H1 (cell line): ENCODE measurements at regions of chr18 and their contacts with region 1.

Region 1: DNA sequence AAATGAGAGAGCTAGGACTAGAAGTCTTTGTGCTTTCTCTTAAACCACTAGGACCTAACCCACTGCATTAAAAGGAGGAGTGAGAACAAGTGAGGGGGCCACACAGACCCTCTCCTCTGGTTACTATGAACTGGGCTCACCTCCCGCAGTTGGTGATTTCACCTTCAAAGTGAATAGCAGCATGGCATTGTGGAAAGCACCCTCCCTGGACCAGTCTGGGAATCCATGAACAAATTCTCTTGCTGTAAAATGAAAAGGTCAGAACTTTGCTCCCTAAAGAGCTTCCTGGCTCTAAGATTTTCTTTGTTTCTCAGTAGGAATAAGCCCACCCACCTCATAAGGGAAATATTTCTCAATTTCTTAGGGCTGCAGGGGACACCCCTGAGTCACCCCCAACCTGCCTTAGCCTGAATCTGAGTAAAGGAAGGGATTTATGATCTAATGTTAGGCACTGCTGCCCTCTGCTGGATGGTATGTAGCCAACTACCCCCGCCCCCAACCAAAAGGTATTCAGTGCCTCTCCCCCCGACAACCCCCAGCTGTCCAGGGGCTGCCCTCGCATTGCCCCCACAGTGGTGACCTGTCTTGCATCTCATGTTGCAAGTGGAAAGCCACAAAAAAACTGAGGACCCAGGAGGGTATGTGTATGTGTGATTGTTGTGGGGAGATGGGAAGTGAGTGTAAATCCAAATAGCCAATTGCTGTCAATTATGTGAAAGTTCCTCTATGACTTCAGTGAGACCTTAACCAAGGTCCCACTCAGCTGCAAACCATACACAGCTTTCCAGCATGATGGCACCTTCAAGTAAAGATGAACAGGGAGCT is 230.9 kb upstream of the SLC14A2 start:
- DNase-seq: peak; percentile 19 to 86
- H3K4me3 ChIP-seq: no peak overlapping the region
- H3K27ac ChIP-seq: no peak overlapping the region
- H3K4me1 ChIP-seq: peaks cover 0 to 4% (median 1%) of the 10 kb centered on the region in 4 experiments; a peak in 3 of 7 replicates
- H3K27me3 ChIP-seq: no peaks in the 10 kb centered on the region
- CTCF ChIP-seq: peak; percentile 65 to 77 (median 75)
- EP300 ChIP-seq: no peak
- POLR2A ChIP-seq: no peak
- RAD21 ChIP-seq: peak; percentile 76 to 84

Region 2: DNA sequence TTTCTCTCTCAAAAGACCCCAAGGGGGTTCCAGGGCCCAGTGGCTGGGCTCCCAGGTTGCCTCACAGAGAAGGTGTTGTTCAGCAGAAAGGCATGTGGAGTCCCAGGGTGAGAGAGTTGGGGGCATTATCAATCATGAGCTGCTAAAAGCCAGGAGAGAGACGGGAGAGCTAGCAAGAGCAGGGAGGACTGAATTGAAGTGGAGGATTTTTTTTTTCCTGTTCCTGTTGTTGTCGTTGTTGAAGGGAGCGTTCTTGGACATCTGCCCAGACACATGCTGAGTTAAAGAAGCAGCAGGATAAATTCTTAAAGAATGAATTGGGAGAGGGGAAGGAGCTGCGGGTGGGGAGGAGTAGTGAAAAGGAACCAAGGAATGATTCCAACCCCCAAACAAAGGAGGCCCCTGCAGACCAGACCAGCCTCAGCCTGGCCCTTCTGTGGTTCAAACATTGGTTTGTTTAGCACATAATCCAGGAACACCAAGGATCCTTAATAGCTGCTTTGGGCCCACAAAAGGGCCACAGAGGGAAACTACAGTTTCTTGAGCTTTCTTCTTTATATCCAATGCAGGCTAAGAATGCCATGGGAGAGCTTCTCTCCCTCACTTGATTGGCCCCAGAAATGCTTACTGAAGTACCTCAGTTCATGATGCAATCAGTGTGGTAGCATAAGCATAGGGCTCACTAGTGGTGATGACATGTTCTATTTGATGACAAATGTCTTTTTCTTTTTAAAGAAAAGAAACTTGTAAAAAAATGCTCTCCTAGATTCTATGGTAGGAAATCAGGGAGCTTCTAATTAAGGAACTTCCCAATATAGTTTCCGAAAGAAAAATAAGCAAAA is 557.7 kb before region 1 on chr18:
- CTCF ChIA-PET with region 1: no interaction called
- POLR2A ChIA-PET with region 1: no interaction called
- DNase-seq: no peak
- H3K4me3 ChIP-seq: no peak overlapping the region; a peak in 1 of 8 replicates
- H3K27ac ChIP-seq: no peak overlapping the region
- H3K4me1 ChIP-seq: peaks cover 0 to 5% (median 2%) of the 10 kb centered on the region in 4 experiments; a peak in 1 of 7 replicates
- H3K27me3 ChIP-seq: no peaks in the 10 kb centered on the region
- CTCF ChIP-seq: no peak
- EP300 ChIP-seq: no peak
- POLR2A ChIP-seq: no peak
- RAD21 ChIP-seq: no peak

Region 3: DNA sequence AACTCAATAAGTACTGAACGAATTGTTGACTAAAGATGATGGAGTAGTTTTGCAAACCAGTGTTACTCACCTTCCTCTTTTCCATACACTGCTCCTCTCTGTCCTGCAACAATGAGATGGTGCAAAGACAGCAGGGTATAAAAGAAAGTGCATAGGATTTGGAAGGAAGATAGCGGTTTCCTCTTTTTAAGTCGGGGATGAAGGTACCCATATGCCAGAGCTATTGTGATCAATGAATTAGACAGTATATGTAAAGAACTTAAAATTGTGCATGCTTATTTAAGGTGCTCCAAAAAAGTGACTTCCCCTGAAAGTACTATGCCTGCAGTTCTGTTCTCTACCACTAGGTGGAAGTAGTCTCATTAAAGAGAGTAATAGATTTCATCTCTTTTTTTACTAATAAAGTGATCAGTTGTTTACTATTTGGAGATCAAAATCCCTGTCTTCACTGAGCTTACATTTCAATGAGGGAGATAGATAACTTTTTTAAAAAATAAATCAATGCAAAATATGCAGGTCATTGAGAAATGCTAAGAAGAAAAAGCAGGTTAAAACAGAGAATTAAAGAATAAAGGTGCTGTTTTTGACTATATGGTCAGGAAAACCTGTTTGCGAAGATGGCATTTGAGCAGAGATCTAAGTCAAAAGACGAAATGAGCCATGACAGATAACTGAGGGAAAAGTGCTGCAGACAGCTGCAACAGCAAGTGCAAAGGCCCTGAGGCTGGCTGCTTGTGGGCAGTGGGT is 108.8 kb before region 1 on chr18:
- CTCF ChIA-PET with region 1: interaction called, 131 read pairs
- POLR2A ChIA-PET with region 1: no interaction called
- DNase-seq: no peak
- H3K4me3 ChIP-seq: no peak overlapping the region
- H3K27ac ChIP-seq: no peak overlapping the region
- H3K4me1 ChIP-seq: no peaks in the 10 kb centered on the region
- H3K27me3 ChIP-seq: no peaks in the 10 kb centered on the region
- CTCF ChIP-seq: peak in 2 of 3 experiments; percentile 41 to 68; a peak in 2 of 4 replicates
- EP300 ChIP-seq: no peak
- POLR2A ChIP-seq: no peak
- RAD21 ChIP-seq: peak; percentile 63 to 68

Region 4: GRCh38 chr18:45291621-45292615 is 92.4 kb before region 1 on chr18:
- CTCF ChIA-PET with region 1: interaction called, 31 read pairs
- POLR2A ChIA-PET with region 1: no interaction called
- DNase-seq: no peak
- H3K4me3 ChIP-seq: no peak overlapping the region
- H3K27ac ChIP-seq: no peak overlapping the region
- H3K4me1 ChIP-seq: no peaks in the 10 kb centered on the region
- H3K27me3 ChIP-seq: no peaks in the 10 kb centered on the region
- CTCF ChIP-seq: no peak
- EP300 ChIP-seq: no peak
- POLR2A ChIP-seq: no peak
- RAD21 ChIP-seq: no peak

Region 5: GRCh38 chr18:45317948-45318640 is 66.3 kb before region 1 on chr18:
- CTCF ChIA-PET with region 1: interaction called, 42 read pairs
- POLR2A ChIA-PET with region 1: interaction called, 3 read pairs
- DNase-seq: no peak
- H3K4me3 ChIP-seq: no peak overlapping the region
- H3K27ac ChIP-seq: no peak overlapping the region
- H3K4me1 ChIP-seq: no peaks in the 10 kb centered on the region
- H3K27me3 ChIP-seq: no peaks in the 10 kb centered on the region
- CTCF ChIP-seq: no peak
- EP300 ChIP-seq: no peak
- POLR2A ChIP-seq: no peak
- RAD21 ChIP-seq: no peak

Region 6: DNA sequence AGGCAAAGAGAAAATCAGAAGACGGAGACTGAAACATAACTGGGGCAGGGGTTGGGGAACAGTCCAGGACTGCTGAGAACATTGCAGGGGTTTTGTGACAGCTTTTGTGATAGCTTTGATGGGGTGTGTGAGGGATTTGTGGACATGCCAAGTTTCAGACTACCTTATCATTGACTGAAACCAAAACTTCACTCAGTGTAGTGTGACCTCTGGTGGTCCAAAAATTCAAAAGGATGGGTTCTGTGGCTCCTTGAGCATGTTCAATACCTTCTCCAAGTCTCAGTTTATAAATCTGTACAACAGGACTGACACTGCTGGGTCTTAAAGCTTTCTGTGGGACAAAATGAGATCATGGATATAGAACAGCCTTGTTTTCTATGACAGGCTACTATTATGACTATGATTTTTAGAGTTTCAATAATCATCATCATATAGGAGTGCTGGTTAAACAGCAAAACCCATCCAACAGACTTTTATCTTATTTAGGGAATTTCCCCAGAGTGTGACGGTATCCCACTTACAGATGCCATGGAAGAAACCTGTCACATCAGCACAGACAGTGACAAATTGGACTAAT is 28.3 kb before region 1 on chr18:
- CTCF ChIA-PET with region 1: interaction called, 14 read pairs
- POLR2A ChIA-PET with region 1: no interaction called
- DNase-seq: no peak
- H3K4me3 ChIP-seq: no peak overlapping the region
- H3K27ac ChIP-seq: no peak overlapping the region
- H3K4me1 ChIP-seq: no peaks in the 10 kb centered on the region
- H3K27me3 ChIP-seq: no peaks in the 10 kb centered on the region
- CTCF ChIP-seq: 0 out of 4 replicates have a peak, but pooled peaks of 1 of the 3 experiments have one; percentile 2
- EP300 ChIP-seq: no peak
- POLR2A ChIP-seq: no peak
- RAD21 ChIP-seq: peak; percentile 19 to 31; a peak in 2 of 4 replicates

Region 7: DNA sequence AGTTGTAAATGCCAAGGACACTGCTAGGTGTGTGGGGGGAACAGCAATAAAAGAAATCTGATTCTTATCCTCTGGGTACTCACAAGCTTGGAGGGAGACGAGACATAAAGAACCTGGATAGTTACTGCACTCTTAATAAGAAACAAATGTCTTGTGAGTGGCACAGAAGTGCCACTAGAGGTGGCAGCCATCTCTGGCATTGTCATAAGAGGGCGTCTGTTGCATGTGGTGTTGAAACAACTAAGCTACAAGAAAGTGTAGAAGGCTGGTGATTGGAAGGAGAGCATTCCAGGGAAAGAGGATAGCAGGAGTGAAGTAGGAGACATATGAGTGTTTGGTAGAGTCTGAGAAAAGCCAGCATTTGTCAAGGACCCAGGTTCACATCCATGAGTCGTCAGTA is 33.8 kb after region 1 on chr18:
- CTCF ChIA-PET with region 1: interaction called, 10 read pairs
- POLR2A ChIA-PET with region 1: interaction called, 3 read pairs
- DNase-seq: no peak
- H3K4me3 ChIP-seq: no peak overlapping the region
- H3K27ac ChIP-seq: no peak overlapping the region
- H3K4me1 ChIP-seq: peaks cover 2 to 8% (median 5%) of the 10 kb centered on the region in 4 experiments; a peak in 4 of 7 replicates
- H3K27me3 ChIP-seq: peaks cover 0 to 1% (median 0%) of the 10 kb centered on the region in 4 experiments; a peak in 1 of 7 replicates
- CTCF ChIP-seq: no peak
- EP300 ChIP-seq: no peak
- POLR2A ChIP-seq: no peak
- RAD21 ChIP-seq: no peak

Region 8: DNA sequence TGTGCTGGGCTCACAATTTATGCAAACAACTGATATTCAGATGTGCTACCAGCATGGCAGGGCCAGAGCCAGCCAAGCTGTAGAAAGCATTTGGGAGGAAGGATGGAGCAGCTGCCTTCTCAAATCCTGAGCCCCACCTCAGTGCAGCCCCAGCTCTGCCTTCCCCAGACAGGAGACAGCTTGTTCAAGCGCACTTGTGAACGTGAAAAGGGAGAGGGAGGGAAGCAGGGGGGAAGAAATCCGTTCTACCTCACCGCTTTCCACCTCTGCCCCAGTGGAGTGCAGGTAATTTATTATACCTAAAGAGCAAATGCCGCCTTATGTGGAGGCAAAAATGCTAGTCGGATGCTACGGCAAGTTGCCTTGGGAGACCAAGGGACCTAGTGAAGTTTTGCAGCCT is 164.9 kb after region 1 on chr18:
- CTCF ChIA-PET with region 1: no interaction called
- POLR2A ChIA-PET with region 1: no interaction called
- DNase-seq: no peak
- H3K4me3 ChIP-seq: no peak overlapping the region
- H3K27ac ChIP-seq: no peak overlapping the region
- H3K4me1 ChIP-seq: no peaks in the 10 kb centered on the region
- H3K27me3 ChIP-seq: no peaks in the 10 kb centered on the region
- CTCF ChIP-seq: no peak
- EP300 ChIP-seq: no peak
- POLR2A ChIP-seq: no peak
- RAD21 ChIP-seq: no peak

Region 9: GRCh38 chr18:45580127-45580526 is 195.8 kb after region 1 on chr18:
- CTCF ChIA-PET with region 1: no interaction called
- POLR2A ChIA-PET with region 1: no interaction called
- DNase-seq: no peak
- H3K4me3 ChIP-seq: no peak overlapping the region
- H3K27ac ChIP-seq: no peak overlapping the region
- H3K4me1 ChIP-seq: peaks cover 0 to 4% (median 2%) of the 10 kb centered on the region in 4 experiments; a peak in 5 of 7 replicates
- H3K27me3 ChIP-seq: no peaks in the 10 kb centered on the region; a peak in 2 of 7 replicates
- CTCF ChIP-seq: no peak
- EP300 ChIP-seq: no peak
- POLR2A ChIP-seq: no peak
- RAD21 ChIP-seq: no peak